ENCODE measurements at regions of chr1 and their contacts with region 1.

Region 1: GRCh38 chr1:151762941-151763921 is at the start of gene MRPL9:
- DNase-seq: peak; percentile 89
- ATAC-seq: peak; percentile 99
- H3K4me3 Mint-ChIP-seq: peak within 1 kb of the TSS; percentile 81
- H3K27ac Mint-ChIP-seq: peak within 1 kb of the TSS; percentile 91
- H3K4me1 Mint-ChIP-seq: peaks cover 30% of the 10 kb centered on the region
- H3K27me3 Mint-ChIP-seq: no peaks in the 10 kb centered on the region
- total RNA-seq, gene MRPL9: 111 to 121 TPM

Region 2: DNA sequence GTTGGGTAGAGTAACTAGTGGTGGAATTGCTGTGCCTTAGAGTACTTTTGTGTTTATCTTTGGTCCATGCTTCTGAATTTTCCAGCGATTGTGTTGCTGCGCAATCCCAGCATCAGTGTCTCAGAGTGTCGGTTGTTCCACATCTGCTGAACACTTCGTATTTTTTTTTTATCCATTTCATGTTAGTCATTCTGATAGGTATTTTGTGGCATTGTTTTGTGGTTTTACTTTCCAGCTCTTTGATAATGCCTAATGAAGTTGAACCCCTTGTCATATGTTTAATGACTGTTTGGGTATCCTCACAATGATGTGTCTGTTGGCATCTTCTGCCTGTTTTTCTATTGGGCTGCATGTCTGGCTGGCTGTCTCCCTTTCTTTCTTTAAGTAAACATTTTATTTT is 209.6 kb before region 1 on chr1:
- CTCF ChIA-PET with region 1: no interaction called
- POLR2A ChIA-PET with region 1: no interaction called
- DNase-seq: no peak
- ATAC-seq: no peak
- H3K4me3 Mint-ChIP-seq: no peak overlapping the region
- H3K27ac Mint-ChIP-seq: no peak overlapping the region
- H3K4me1 Mint-ChIP-seq: peaks cover 8% of the 10 kb centered on the region
- H3K27me3 Mint-ChIP-seq: peaks cover 3% of the 10 kb centered on the region

Region 3: GRCh38 chr1:151705753-151706463 is 57.3 kb before region 1 on chr1:
- CTCF ChIA-PET with region 1: no interaction called
- POLR2A ChIA-PET with region 1: no interaction called
- DNase-seq: no peak
- ATAC-seq: no peak
- H3K4me3 Mint-ChIP-seq: no peak overlapping the region
- H3K27ac Mint-ChIP-seq: no peak overlapping the region
- H3K4me1 Mint-ChIP-seq: peaks cover 9% of the 10 kb centered on the region
- H3K27me3 Mint-ChIP-seq: no peaks in the 10 kb centered on the region

Region 4: DNA sequence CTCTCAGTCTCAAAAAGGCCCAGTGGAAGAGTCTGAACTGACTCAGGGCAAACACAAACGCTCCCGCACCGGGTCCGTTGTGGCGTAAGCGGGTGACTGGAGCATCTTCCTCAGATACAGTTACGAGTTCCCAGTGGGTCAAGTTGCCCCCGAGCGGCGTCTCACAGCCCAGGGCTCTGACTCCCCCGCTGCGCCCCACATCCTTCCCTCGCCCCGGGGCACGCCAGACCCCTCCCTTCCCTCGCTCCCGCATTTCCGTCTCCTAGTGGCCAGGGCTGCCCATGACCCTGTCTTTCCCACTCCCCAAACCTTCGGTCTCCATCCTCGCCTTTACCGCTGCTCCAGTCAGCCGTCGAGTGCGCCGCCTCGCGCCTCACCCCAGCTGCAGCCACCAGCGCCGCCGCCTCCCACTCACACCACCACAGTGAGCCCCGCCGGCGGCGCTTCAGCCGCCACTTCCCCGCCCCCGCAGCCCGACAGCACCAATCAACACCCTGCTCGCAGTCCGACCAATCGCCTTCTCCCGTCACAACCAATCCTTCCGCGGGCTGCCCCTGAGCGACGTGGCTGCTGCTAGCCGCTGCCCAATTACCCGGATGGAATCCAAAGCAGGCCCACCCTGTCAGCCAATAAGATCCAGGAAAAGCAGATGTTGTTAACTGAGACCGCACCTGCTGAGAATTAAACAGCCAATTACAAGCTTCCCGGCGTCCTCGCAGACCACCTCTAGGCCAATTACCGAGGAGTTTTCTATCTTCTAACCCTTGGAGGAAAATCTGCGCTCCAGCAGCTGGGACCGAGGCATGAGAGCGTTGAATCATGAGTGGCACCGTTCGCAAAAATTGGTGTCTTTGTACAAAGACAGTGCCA is 27.1 kb after region 1 on chr1 and contains the start of gene TDRKH:
- CTCF ChIA-PET with region 1: interaction called, 5 read pairs
- POLR2A ChIA-PET with region 1: interaction called, 15 read pairs
- DNase-seq: peak; percentile 99
- ATAC-seq: peak; percentile 98
- H3K4me3 Mint-ChIP-seq: peak within 1 kb of the TSS; percentile 94
- H3K27ac Mint-ChIP-seq: peak within 1 kb of the TSS; percentile 89
- H3K4me1 Mint-ChIP-seq: peaks cover 27% of the 10 kb centered on the region
- H3K27me3 Mint-ChIP-seq: no peaks in the 10 kb centered on the region
- total RNA-seq, gene TDRKH: 14.6 to 16.4 TPM

Region 5: GRCh38 chr1:151839457-151840405 is 76.5 kb after region 1 on chr1 and contains the start of gene C2CD4D:
- CTCF ChIA-PET with region 1: interaction called, 14 read pairs
- POLR2A ChIA-PET with region 1: interaction called, 3 read pairs
- DNase-seq: peak; percentile 72
- ATAC-seq: peak; percentile 71
- H3K4me3 Mint-ChIP-seq: peak within 1 kb of the TSS; percentile 70
- H3K27ac Mint-ChIP-seq: peak within 1 kb of the TSS; percentile 44
- H3K4me1 Mint-ChIP-seq: peaks cover 46% of the 10 kb centered on the region
- H3K27me3 Mint-ChIP-seq: peaks cover 12% of the 10 kb centered on the region
- total RNA-seq, gene C2CD4D: 0.23 to 0.26 TPM

Region 6: DNA sequence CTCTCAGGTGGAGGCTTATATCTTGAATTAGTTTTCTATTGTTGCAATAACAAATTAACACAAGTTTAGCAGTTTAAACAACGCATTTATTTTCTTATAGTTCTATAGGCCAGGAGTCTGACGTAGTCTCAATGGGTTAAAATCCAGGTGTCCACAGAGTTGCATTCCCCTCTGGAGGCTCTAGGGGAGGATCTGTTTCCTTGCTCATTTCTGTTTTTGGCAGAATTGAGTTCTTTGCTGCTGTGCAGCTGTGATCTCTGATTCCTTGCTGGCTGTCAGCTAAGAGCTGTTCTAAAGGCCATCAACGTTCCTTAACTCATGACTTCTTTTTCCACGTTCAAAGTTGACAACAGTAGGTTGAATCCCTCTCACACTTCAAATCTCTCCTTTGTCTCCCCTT is 198.6 kb after region 1 on chr1:
- CTCF ChIA-PET with region 1: no interaction called
- POLR2A ChIA-PET with region 1: no interaction called
- DNase-seq: no peak
- ATAC-seq: no peak
- H3K4me3 Mint-ChIP-seq: no peak overlapping the region
- H3K27ac Mint-ChIP-seq: no peak overlapping the region
- H3K4me1 Mint-ChIP-seq: peaks cover 5% of the 10 kb centered on the region
- H3K27me3 Mint-ChIP-seq: peaks cover 10% of the 10 kb centered on the region